HEK293 (cell line): ENCODE measurements at regions of chr6 and their contacts with region 1.

Region 1: DNA sequence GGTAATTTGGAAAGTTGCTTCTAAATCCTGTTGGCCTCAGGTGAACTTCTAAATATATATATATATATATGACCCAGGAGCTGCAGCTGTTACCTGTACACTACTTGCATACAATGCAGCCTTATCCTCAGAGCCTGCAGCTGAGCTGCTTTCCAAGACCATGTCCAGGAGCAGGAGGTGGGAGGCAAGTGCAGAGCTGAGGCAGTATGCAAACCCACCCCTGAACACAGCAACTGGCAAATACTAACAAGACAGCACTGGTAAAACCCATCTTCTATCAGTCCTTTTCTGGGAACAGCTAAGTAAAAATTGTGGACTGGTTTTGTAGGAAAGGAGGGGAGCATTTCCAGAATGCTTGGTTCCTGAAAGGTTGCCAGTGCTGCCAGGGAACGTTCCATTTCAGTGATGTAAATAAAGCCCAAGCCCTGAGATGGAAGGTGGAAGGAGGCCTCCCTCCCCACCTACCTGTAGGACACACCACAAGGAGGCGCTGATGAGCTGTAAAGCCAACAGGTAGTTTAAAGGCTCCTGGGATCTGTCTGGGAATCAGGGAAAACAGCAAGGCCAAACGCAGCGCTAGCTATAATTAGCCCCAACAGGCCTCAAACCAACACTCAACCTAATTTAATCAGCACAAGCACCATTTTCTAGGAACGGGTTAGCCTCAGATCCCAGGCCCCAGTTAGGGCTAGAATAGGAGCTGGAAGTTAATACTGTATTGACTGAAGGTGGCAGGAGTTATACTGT is 93.8 kb upstream of the MAP7 start:
- H3K4me3 ChIP-seq: no peak overlapping the region
- H3K27ac ChIP-seq: no peak overlapping the region
- H3K4me1 ChIP-seq: no peaks in the 10 kb centered on the region
- CTCF ChIP-seq: peak; percentile 71

Region 2: GRCh38 chr6:136471372-136471771 is 172.7 kb before region 1 on chr6:
- CTCF ChIA-PET with region 1: no interaction called
- POLR2A ChIA-PET with region 1: no interaction called
- H3K4me3 ChIP-seq: no peak overlapping the region
- H3K27ac ChIP-seq: no peak overlapping the region
- H3K4me1 ChIP-seq: peaks cover 9% of the 10 kb centered on the region
- CTCF ChIP-seq: no peak

Region 3: DNA sequence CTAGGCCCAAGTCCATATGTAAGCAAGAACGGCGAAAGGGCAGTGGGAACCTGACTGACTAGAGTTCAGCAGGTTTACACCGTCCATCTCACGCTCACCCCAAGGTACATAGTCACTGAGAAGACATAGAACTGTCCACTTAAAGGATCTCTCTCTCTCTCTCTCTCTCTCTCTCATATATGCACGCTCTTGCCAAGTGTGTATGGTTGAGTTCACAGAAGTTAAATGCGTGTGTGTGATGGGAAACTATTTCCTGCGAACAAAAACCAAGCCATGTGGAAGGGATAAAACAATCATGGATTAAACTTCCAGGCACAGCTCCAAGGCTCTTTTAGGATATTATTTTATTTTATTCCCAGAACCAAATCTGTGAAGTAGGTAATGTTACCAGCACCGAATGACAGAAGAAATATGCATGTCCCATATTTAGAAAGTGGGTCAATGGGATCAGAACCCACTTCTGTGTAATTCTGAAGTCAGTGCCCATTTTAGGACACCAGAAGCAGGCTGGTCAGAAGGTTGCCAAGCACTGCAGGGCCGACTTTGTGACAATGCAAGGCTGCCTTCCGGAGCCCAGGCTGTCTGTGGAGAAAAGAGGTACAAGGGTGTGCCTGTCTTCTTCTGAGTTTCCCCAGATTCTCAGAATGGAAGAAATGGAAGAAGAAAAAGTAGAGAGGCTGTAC is 44.6 kb before region 1 on chr6:
- CTCF ChIA-PET with region 1: interaction called, 16 read pairs
- POLR2A ChIA-PET with region 1: no interaction called
- H3K4me3 ChIP-seq: no peak overlapping the region
- H3K27ac ChIP-seq: no peak overlapping the region
- H3K4me1 ChIP-seq: no peaks in the 10 kb centered on the region
- CTCF ChIP-seq: no peak

Region 4: GRCh38 chr6:136628996-136629395 is 15.0 kb before region 1 on chr6:
- CTCF ChIA-PET with region 1: interaction called, 33 read pairs
- POLR2A ChIA-PET with region 1: no interaction called
- H3K4me3 ChIP-seq: no peak overlapping the region
- H3K27ac ChIP-seq: no peak overlapping the region
- H3K4me1 ChIP-seq: no peaks in the 10 kb centered on the region
- CTCF ChIP-seq: no peak

Region 5: DNA sequence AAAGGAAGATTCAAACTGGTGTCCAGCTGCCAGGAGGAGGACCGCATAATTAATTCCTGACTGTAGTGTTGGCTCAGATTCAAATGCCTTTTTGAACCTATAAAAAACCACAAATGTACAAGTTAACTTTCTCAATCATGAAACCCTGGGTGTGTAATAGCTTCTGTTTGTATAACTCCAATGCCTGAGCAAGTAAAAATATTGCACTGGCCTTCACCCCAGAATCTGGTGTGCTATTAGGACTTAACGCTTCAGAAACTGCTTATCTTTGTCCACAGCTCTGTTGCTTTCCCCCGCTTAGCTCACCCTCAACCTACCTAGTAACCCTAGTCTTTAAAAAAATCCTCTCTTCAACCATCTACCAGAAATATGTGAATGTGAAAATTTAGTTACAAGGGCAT is 25.3 kb after region 1 on chr6:
- CTCF ChIA-PET with region 1: interaction called, 24 read pairs
- POLR2A ChIA-PET with region 1: no interaction called
- H3K4me3 ChIP-seq: no peak overlapping the region
- H3K27ac ChIP-seq: no peak overlapping the region
- H3K4me1 ChIP-seq: peaks cover 9% of the 10 kb centered on the region; the same call in 1 of the 2 replicates
- CTCF ChIP-seq: no peak

Region 6: GRCh38 chr6:136803608-136804007 is 159.6 kb after region 1 on chr6:
- CTCF ChIA-PET with region 1: interaction called, 18 read pairs
- POLR2A ChIA-PET with region 1: no interaction called
- H3K4me3 ChIP-seq: no peak overlapping the region
- H3K27ac ChIP-seq: no peak overlapping the region
- H3K4me1 ChIP-seq: no peaks in the 10 kb centered on the region
- CTCF ChIP-seq: no peak